Activated T-helper 2 cell treated with anti-CD3 and anti-CD28 coated beads, Interferon-gamma antibody, Interleukin-2, Interleukin-4, amounts not matched to agents 10 μg/mL and 5 μg/mL and 100 μg/mL, durations not matched to agents 14 hours and 24 hours and 36 hours (primary cell): ENCODE measurements at regions of chr1 and their contacts with region 1.

Region 1: GRCh38 chr1:155744711-155745283 is 55.9 kb downstream of the DAP3 start:
- DNase-seq: no peak
- H3K4me3 Mint-ChIP-seq: peak overlapping the region; percentile 86
- H3K27ac Mint-ChIP-seq: peak overlapping the region; percentile 88
- H3K4me1 Mint-ChIP-seq: no peaks in the 10 kb centered on the region
- H3K27me3 Mint-ChIP-seq: no peaks in the 10 kb centered on the region

Region 2: GRCh38 chr1:155688324-155689080 is 56.3 kb before region 1 on chr1 and contains the start of gene YY1AP1:
- intact Hi-C with region 1: loop called (anchors 1 kb)
- DNase-seq: peak; percentile 89
- H3K4me3 Mint-ChIP-seq: peak within 1 kb of the TSS; percentile 97
- H3K27ac Mint-ChIP-seq: peak within 1 kb of the TSS; percentile 96
- H3K4me1 Mint-ChIP-seq: peaks cover 52% of the 10 kb centered on the region
- H3K27me3 Mint-ChIP-seq: no peaks in the 10 kb centered on the region
- total RNA-seq, gene YY1AP1: 65.8 and 67.9 TPM in 2 replicates

Region 3: DNA sequence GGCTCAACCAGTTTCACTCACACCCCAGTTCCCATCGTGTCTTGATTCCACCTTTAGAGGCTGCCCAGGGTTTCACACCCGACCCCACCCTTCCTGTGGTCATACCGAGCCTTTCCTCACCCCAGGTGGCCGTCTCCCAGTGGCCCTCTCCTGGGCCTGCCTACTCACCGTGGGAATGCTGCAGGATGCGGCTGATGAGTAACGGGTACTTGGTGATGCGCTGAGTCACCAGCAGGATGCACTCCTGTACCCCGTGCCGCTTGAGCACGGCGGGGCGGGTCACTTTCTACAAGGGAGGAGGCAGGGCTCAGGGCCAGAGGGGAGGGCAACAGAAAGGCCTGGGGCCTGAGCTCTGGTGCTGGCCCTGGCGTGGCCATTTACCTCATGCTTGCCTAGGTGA is 217.1 kb after region 1 on chr1:
- intact Hi-C with region 1: no loop called
- DNase-seq: no peak
- H3K4me3 Mint-ChIP-seq: no peak overlapping the region
- H3K27ac Mint-ChIP-seq: peak overlapping the region; percentile 49
- H3K4me1 Mint-ChIP-seq: peaks cover 18% of the 10 kb centered on the region
- H3K27me3 Mint-ChIP-seq: no peaks in the 10 kb centered on the region